Activated T-helper 2 cell treated with anti-CD3 and anti-CD28 coated beads, Interferon-gamma antibody, Interleukin-2, Interleukin-4, amounts not matched to agents 10 μg/mL and 5 μg/mL and 100 μg/mL, durations not matched to agents 14 hours and 24 hours and 36 hours (primary cell): ENCODE measurements at regions of chr22 and their contacts with region 1.

Region 1: DNA sequence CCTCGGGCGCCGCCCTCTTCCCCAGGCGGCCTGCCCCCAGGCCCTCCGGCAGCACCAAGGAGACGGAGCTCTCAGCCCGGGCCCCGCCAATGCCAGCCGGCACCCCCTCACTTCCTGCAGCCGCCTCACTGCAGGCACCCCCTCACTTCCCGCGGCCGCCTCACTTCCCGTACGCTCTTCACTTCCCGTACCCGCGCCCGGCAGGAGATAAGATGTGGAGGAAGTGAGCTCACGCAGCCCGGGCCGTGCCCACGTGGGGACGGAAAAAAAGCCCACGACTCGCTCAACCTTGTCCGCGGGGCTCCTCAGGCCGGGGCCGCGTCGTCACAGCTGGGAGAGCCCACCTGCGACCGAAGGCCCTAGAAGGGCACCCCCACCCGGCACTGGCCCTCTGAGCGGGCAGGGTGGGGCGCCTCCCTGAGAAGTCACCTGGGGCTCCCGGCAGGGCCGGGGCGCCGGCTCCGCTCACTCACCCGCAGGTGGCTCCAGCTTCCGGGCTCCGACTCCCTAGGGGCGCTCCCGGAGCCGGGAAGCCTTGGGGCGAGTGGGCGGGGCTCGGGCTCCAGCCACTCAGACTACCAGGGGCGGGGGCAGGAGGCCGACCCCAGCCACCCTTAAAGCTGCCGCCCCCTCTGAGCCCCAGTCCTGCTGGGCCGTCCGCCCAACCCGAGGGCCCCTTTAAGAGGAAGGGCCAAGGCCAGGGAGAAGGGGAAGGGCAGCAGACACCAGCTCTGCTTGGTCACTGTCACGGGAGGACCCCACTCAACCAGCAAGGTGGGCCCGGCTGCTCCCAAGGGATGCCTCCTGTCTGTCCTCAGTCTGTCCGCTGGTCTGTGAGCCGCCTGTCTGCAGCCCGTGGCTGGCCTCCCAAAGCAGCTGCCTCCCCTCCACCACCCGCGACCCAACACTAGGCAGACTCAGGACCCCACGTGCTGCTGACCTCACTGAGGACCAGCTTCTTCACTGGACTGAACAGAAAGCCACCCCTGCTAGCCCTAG is 31.4 kb downstream of the PISD start:
- DNase-seq: peak; percentile 84
- H3K4me3 Mint-ChIP-seq: peak overlapping the region; percentile 83
- H3K27ac Mint-ChIP-seq: peak overlapping the region; percentile 85
- H3K4me1 Mint-ChIP-seq: peaks cover 34% of the 10 kb centered on the region
- H3K27me3 Mint-ChIP-seq: no peaks in the 10 kb centered on the region

Region 2: DNA sequence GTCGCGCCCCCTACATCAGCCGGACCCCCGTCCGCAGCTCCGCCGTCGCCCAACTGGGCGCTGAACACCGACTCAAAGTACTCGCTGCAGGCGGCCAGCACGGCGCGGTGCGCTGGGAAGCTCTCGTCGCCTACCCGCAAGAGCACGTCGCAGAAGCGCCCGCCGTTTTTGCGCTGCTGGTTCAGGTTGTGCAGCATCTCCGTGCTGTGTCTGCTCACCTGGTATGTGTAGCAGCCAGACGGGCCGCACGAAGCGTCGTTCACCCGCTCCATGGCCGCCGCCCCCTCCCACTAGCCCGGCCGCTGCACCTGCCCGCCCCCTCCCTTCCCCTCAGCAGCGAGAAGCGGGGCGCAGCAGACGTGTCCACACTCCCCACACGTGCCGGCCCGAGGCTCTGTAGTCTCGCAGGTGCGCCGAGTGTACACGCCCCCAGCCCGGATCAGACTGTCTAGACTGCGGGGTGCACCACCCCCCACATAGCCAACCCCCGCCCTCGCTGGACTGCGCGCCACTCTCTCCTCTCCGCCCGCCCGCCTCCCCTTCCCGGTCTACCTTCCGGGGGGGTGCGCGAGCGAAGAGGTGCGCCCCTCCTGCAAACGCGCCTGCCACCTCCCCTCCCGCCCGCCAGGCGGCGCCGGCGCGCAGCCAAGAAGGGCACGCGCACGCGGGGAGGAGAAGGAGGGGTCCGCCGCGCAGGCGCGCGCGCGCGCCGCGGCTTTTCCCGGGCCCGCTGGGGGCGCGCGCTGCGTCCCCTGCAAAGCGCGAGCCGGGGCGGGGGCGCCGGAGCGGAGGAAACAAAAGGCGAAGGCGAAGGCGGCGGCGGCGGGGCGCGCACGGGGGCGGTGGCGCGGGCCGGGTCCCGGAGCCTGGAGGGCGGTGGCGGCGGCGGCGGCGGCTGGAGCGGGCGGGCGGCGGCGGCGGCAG is 285.0 kb before region 1 on chr22:
- intact Hi-C with region 1: loop called (anchors 5 kb)
- DNase-seq: peak; percentile 85
- H3K4me3 Mint-ChIP-seq: peak overlapping the region; percentile 88
- H3K27ac Mint-ChIP-seq: peak overlapping the region; percentile 83
- H3K4me1 Mint-ChIP-seq: peaks cover 37% of the 10 kb centered on the region
- H3K27me3 Mint-ChIP-seq: no peaks in the 10 kb centered on the region

Region 3: GRCh38 chr22:31537019-31537535 is 93.6 kb before region 1 on chr22:
- intact Hi-C with region 1: loop called (anchors 5 kb)
- DNase-seq: peak; percentile 26
- H3K4me3 Mint-ChIP-seq: peak overlapping the region; percentile 64
- H3K27ac Mint-ChIP-seq: peak overlapping the region; percentile 99
- H3K4me1 Mint-ChIP-seq: peaks cover 60% of the 10 kb centered on the region
- H3K27me3 Mint-ChIP-seq: no peaks in the 10 kb centered on the region

Region 4: GRCh38 chr22:31561238-31561887 is 69.3 kb before region 1 on chr22:
- intact Hi-C with region 1: loop called (anchors 2 kb)
- DNase-seq: peak; percentile 26
- H3K4me3 Mint-ChIP-seq: no peak overlapping the region
- H3K27ac Mint-ChIP-seq: peak overlapping the region; percentile 70
- H3K4me1 Mint-ChIP-seq: peaks cover 10% of the 10 kb centered on the region
- H3K27me3 Mint-ChIP-seq: no peaks in the 10 kb centered on the region

Region 5: DNA sequence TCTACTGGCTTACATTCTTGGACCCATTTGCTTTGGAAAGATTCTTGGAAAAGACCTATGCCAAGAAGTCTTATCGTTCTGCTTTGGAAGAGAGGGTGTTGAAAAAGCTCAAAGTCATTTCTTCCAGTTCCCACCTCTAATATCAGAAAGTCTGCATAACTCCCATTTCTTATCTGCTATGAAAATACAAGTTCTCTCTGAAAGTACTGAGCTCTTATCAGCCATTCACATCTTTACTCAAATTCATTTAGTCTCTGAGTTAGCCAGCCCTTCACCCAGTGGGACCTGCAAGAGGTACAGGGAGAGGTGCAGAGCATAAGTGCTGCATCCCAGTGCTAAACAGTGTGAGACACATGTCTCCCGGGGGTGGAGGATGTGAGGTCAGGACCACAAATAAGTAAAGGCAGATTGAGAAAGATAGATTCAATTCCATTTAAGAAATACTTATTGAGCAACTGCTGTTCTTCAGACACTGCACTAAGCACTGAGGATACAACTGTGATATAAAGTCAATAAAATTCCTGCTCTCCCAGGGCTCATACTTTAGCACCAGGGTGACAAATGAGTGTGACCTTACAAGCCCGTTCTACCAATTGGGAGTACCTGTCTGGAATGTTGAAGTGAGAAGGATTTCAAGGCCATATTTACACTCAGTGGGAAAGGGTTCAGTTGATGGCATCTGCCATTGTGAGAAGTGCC is 45.3 kb before region 1 on chr22:
- intact Hi-C with region 1: loop called (anchors 2 kb)
- DNase-seq: peak; percentile 20
- H3K4me3 Mint-ChIP-seq: peak overlapping the region; percentile 20
- H3K27ac Mint-ChIP-seq: peak overlapping the region; percentile 81
- H3K4me1 Mint-ChIP-seq: peaks cover 51% of the 10 kb centered on the region
- H3K27me3 Mint-ChIP-seq: no peaks in the 10 kb centered on the region

Region 6: DNA sequence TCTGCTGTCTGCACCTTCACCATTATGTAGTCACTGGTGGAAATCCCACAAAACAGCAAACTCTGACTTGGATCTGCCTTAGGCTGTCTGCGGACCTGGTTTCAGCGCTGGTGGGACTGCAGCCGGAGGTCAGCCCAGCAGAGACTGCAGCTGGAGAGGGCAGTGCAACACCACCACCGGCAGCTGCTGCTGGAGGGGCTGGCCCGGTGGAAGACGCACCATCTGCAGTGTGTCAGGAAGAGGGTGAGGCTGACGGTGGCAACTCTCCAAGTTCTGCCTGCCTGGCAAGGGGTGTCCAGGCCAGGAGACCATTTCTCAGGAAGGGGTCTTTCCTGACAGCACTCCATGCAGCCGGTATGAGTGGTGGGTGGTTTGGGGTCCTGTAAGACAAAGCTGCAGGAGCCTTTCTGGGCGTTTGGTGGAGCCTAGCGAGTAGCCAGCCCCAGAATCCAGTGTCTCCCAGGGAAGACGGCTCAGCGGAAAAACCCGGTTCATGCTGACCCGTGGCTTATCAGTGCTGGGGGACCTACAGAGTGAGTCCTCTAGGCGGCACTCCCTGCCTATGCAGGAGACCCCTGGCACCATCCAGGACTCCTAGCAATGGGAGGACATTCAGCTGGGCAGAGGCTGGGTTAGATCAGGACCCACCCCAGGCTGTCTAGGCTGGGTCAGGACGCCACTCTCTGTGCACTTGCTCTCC is 19.4 kb before region 1 on chr22:
- intact Hi-C with region 1: no loop called
- DNase-seq: no peak
- H3K4me3 Mint-ChIP-seq: no peak overlapping the region
- H3K27ac Mint-ChIP-seq: no peak overlapping the region
- H3K4me1 Mint-ChIP-seq: peaks cover 12% of the 10 kb centered on the region
- H3K27me3 Mint-ChIP-seq: no peaks in the 10 kb centered on the region